ENCODE measurements at regions of chr4 and their contacts with region 1.

Region 1: DNA sequence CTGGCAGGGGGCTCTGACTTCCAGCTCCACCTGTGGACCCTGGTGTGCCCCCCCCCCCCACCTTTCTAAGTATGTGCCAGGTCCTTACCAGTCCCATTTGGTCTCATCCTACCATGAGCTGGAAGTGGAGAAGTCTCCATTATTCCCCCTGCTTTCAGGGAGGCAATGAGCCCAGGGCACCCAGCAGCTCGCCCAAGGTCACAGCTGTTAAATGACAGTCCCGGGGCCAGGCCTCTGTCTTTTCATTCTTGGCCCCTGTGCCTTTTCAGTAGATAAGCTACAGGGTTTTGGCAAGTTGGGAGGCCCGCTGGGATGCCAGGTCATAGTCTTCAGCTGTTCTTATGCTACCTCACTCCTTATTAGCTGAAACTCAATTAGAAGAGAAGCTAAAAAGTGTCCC is 249.1 kb downstream of the EVC2 start:
- DNase-seq: no peak
- ATAC-seq: no peak
- H3K4me3 ChIP-seq: no peak overlapping the region
- H3K27ac ChIP-seq: no peak overlapping the region
- H3K4me1 ChIP-seq: no peaks in the 10 kb centered on the region
- H3K27me3 ChIP-seq: no peaks in the 10 kb centered on the region
- CTCF ChIP-seq: no peak

Region 2: GRCh38 chr4:4443821-4444220 is 1015.4 kb before region 1 on chr4:
- CTCF ChIA-PET with region 1: no interaction called
- POLR2A ChIA-PET with region 1: interaction called, 11 read pairs
- in situ Hi-C with region 1: no loop called
- intact Hi-C with region 1: no loop called
- DNase-seq: no peak
- ATAC-seq: no peak
- H3K4me3 ChIP-seq: no peak overlapping the region
- H3K27ac ChIP-seq: no peak overlapping the region
- H3K4me1 ChIP-seq: no peaks in the 10 kb centered on the region
- H3K27me3 ChIP-seq: no peaks in the 10 kb centered on the region
- CTCF ChIP-seq: no peak

Region 3: DNA sequence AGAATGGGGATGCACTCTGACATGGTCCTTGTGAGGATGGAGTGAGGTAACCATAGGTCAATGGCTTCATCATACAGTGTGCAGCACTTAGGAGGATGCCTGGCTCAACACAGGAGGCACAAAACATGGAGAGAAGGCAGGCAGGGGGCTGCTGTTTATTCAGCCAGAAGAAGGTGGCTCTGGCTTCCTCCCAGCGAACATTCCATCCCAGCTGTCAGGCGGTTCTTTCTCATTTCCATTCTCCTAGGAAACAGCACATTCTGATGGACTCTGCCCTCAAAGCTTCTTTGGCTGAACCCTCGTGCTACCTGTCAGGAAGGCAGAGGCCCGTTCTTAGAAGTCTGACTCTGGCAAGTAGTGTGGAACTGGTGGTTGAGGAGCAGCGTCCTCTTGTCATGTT is 389.3 kb before region 1 on chr4:
- CTCF ChIA-PET with region 1: no interaction called
- POLR2A ChIA-PET with region 1: no interaction called
- in situ Hi-C with region 1: no loop called
- intact Hi-C with region 1: no loop called
- DNase-seq: no peak
- ATAC-seq: no peak
- H3K4me3 ChIP-seq: no peak overlapping the region
- H3K27ac ChIP-seq: no peak overlapping the region
- H3K4me1 ChIP-seq: no peaks in the 10 kb centered on the region
- H3K27me3 ChIP-seq: no peaks in the 10 kb centered on the region
- CTCF ChIP-seq: no peak

Region 4: GRCh38 chr4:5446595-5447226 is 12.5 kb before region 1 on chr4:
- CTCF ChIA-PET with region 1: no interaction called
- POLR2A ChIA-PET with region 1: interaction called, 10 read pairs
- in situ Hi-C with region 1: no loop called
- intact Hi-C with region 1: no loop called
- DNase-seq: no peak
- ATAC-seq: no peak
- H3K4me3 ChIP-seq: no peak overlapping the region
- H3K27ac ChIP-seq: no peak overlapping the region
- H3K4me1 ChIP-seq: no peaks in the 10 kb centered on the region
- H3K27me3 ChIP-seq: no peaks in the 10 kb centered on the region
- CTCF ChIP-seq: no peak

Measured in Panc1 (cell line).